Transverse colon (tissue), 4 donors: ENCODE measurements at regions of chr1 and their contacts with region 1.

Region 1: GRCh38 chr1:240732390-240732789 is 120.4 kb upstream of the GREM2 start:
- DNase-seq: no peak
- H3K4me3 ChIP-seq: no peak overlapping the region
- H3K27ac ChIP-seq: no peak overlapping the region
- H3K4me1 ChIP-seq: no peaks in the 10 kb centered on the region
- H3K27me3 ChIP-seq: no peaks in the 10 kb centered on the region
- CTCF ChIP-seq: peak; percentile 56 to 72 (median 64)
- EP300 ChIP-seq: no peak
- POLR2A ChIP-seq: no peak

Region 2: GRCh38 chr1:240646571-240647240 is 85.7 kb before region 1 on chr1:
- in situ Hi-C with region 1: no loop called
- intact Hi-C with region 1: no loop called
- DNase-seq: no peak
- H3K4me3 ChIP-seq: no peak overlapping the region
- H3K27ac ChIP-seq: no peak overlapping the region
- H3K4me1 ChIP-seq: no peaks in the 10 kb centered on the region
- H3K27me3 ChIP-seq: no peaks in the 10 kb centered on the region
- CTCF ChIP-seq: no peak
- EP300 ChIP-seq: no peak
- POLR2A ChIP-seq: no peak

Region 3: GRCh38 chr1:240946926-240947325 is 214.5 kb after region 1 on chr1:
- in situ Hi-C with region 1: loop called in 3 of 4 experiments (anchors 5 to 25 kb)
- intact Hi-C with region 1: no loop called
- DNase-seq: peak; percentile 40
- H3K4me3 ChIP-seq: no peak overlapping the region
- H3K27ac ChIP-seq: no peak overlapping the region
- H3K4me1 ChIP-seq: no peaks in the 10 kb centered on the region
- H3K27me3 ChIP-seq: no peaks in the 10 kb centered on the region
- CTCF ChIP-seq: peak; percentile 45 to 64 (median 60)
- EP300 ChIP-seq: no peak
- POLR2A ChIP-seq: no peak

Region 4: DNA sequence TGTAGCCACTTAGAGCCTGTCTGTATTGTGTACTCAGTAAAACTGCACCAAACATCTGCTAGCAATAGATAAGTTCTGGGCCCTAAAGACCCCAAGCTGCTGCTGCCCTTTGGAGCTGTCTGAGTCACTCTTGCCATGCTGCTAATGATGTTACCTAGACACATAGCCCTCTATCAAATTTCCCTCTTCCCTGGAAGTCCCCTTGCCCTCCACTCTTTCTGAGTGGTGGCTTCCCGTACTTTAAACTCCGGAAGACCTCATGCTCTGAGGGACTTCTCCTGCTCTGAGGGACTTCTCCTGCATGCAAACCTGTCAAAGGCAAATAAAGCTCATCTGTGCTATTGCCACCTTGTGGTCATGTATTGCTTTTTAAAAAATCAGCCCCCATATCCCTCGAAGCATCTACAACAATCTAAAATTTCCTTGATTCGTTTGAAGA is 753.2 kb after region 1 on chr1:
- in situ Hi-C with region 1: loop called in 1 of 4 experiments (anchors 25 kb)
- intact Hi-C with region 1: no loop called
- DNase-seq: no peak
- H3K4me3 ChIP-seq: no peak overlapping the region
- H3K27ac ChIP-seq: no peak overlapping the region
- H3K4me1 ChIP-seq: no peaks in the 10 kb centered on the region
- H3K27me3 ChIP-seq: no peaks in the 10 kb centered on the region
- CTCF ChIP-seq: peak in 3 of 5 experiments; percentile 19 to 25 (median 21)
- EP300 ChIP-seq: no peak
- POLR2A ChIP-seq: no peak